ENCODE measurements at regions of chr7 and their contacts with region 1.

Region 1: GRCh38 chr7:6198689-6199595 is 73.5 kb downstream of the CYTH3 start:
- DNase-seq: no peak
- ATAC-seq: no peak
- H3K4me3 ChIP-seq: no peak overlapping the region
- H3K4me3 Mint-ChIP-seq: no peak overlapping the region
- H3K27ac ChIP-seq: no peak overlapping the region
- H3K27ac Mint-ChIP-seq: no peak overlapping the region
- H3K4me1 ChIP-seq: no peaks in the 10 kb centered on the region
- H3K4me1 Mint-ChIP-seq: peaks cover 0 to 6% (median 0%) of the 10 kb centered on the region in 3 donors
- H3K27me3 ChIP-seq: peaks cover 0 to 3% of the 10 kb centered on the region in 2 experiments
- H3K27me3 Mint-ChIP-seq: no peaks in the 10 kb centered on the region

Region 2: DNA sequence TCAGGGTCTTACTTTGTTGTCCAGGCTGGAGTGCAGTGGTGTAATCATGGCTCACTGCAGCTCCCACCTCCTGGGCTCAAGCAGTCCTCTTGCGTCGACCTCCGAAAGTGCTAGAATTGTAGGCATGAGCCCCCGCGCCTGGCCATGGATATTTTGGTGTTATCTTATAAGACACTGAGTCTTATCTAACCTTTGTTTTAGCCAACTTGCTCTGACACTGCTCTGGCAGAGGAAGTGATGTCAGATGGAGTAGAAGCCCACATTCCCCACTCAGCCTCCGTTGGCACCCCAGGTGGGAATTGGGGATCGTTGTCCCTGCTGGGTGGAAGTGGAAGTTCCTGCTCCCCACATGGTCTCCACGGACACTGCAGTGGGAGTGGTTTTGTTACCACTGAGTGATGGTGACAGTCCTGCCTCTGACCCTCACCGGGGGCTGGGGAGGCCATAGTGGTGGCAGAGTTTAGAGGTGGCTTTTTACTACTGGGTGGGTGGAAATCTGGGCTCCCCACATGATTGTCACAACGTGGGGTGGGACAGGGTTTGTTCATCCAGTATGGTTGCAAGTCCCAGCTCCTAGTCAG is 68.8 kb before region 1 on chr7:
- CTCF ChIA-PET with region 1: no interaction called
- POLR2A ChIA-PET with region 1: no interaction called
- DNase-seq: no peak
- ATAC-seq: no peak
- H3K4me3 ChIP-seq: no peak overlapping the region
- H3K4me3 Mint-ChIP-seq: no peak overlapping the region
- H3K27ac ChIP-seq: no peak overlapping the region
- H3K27ac Mint-ChIP-seq: no peak overlapping the region
- H3K4me1 ChIP-seq: no peaks in the 10 kb centered on the region
- H3K4me1 Mint-ChIP-seq: peaks cover 5 to 19% (median 15%) of the 10 kb centered on the region in 3 donors
- H3K27me3 ChIP-seq: no peaks in the 10 kb centered on the region
- H3K27me3 Mint-ChIP-seq: no peaks in the 10 kb centered on the region

Region 3: DNA sequence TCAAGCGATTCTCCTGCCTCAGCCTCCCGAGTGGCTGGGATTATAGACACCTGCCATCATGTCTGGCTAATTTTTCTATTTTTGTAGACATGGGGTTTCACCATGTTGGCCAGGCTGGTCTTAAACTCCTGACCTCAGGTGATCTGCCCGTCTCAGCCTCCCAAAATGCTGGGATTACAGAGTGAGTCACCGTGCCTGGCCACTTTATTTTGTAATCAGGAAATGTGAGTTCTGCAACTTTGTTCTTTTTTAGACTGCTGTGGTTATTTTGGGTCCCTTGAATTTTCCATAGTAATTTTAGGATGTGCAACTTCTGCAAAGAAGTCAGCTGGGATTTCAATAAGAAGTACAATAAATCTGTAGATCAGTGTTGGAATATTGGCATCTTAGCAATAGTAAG is 23.3 kb before region 1 on chr7:
- CTCF ChIA-PET with region 1: no interaction called
- POLR2A ChIA-PET with region 1: interaction called in 1 of 2 experiments, 14 read pairs
- DNase-seq: no peak
- ATAC-seq: no peak
- H3K4me3 ChIP-seq: no peak overlapping the region
- H3K4me3 Mint-ChIP-seq: no peak overlapping the region
- H3K27ac ChIP-seq: no peak overlapping the region
- H3K27ac Mint-ChIP-seq: no peak overlapping the region
- H3K4me1 ChIP-seq: no peaks in the 10 kb centered on the region
- H3K4me1 Mint-ChIP-seq: no peaks in the 10 kb centered on the region
- H3K27me3 ChIP-seq: no peaks in the 10 kb centered on the region
- H3K27me3 Mint-ChIP-seq: no peaks in the 10 kb centered on the region

Measured in T-cell (primary cell).